Activated CD4-positive, alpha-beta T cell treated with anti-CD3 and anti-CD28 coated beads for 36 hours (primary cell): ENCODE measurements at regions of chr5 and their contacts with region 1.

Region 1: DNA sequence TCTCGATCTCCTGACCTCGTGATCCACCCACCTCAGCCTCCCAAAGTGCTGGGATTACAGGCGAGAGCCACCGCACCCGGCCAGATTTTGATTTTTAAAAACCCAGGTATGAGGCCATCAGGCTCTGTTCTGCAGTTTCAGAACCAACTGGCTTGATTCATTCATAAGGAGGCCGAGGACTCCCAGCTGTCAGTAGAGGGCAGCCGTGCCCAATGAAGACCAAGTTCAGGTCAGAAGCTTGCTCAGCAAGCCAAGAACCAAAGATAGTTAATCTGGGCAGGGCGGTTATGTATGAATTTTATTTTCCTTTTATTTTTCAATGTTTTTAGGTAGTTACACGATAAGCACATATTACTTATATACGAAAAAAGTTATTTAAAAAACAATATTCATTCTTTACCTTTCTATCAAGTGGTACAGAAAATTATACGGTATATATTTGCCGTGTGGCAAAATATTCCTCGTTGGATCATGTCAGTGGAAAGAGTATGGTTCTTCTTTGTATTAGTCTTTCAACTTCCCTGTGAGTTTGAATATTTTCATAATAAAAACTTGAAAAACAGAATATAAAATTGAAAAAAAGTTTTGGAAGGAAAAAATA is 18.0 kb downstream of the MGAT1 start:
- DNase-seq: peak; percentile 86
- ATAC-seq: peak; percentile 74
- H3K4me3 Mint-ChIP-seq: no peak overlapping the region
- H3K27ac Mint-ChIP-seq: no peak overlapping the region
- H3K4me1 Mint-ChIP-seq: peaks cover 22% of the 10 kb centered on the region
- H3K27me3 Mint-ChIP-seq: no peaks in the 10 kb centered on the region

Region 2: GRCh38 chr5:180441563-180441962 is 343.0 kb before region 1 on chr5:
- CTCF ChIA-PET with region 1: no interaction called
- POLR2A ChIA-PET with region 1: no interaction called
- intact Hi-C with region 1: no loop called
- DNase-seq: no peak
- ATAC-seq: no peak
- H3K4me3 Mint-ChIP-seq: no peak overlapping the region
- H3K27ac Mint-ChIP-seq: no peak overlapping the region
- H3K4me1 Mint-ChIP-seq: peaks cover 2% of the 10 kb centered on the region
- H3K27me3 Mint-ChIP-seq: peaks cover 14% of the 10 kb centered on the region

Region 3: DNA sequence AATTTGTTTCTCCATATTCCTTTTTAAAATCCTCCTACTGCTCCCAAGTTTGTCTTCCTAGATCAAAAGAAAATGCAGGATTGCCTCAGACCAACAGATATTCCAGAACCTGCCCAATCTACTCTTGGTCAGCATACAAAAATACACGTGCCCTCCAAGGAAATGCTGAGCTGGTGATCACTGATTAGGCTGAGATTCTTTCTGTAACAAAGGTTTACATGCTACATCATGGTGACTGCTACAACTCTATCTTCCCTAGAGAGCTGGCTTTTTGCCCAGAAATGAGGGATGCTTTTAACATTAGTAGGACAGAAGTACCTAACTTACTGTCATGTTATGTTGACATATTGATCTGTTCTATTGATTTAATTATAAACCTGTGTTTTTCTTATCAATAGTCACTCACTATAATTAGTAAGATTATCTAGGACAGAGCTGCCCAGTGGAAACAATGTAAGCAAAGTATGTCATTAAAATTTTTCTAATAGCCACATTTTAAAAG is 80.2 kb before region 1 on chr5:
- CTCF ChIA-PET with region 1: no interaction called
- POLR2A ChIA-PET with region 1: no interaction called
- intact Hi-C with region 1: no loop called
- DNase-seq: no peak
- ATAC-seq: no peak
- H3K4me3 Mint-ChIP-seq: no peak overlapping the region
- H3K27ac Mint-ChIP-seq: no peak overlapping the region
- H3K4me1 Mint-ChIP-seq: peaks cover 2% of the 10 kb centered on the region
- H3K27me3 Mint-ChIP-seq: peaks cover 2% of the 10 kb centered on the region

Region 4: DNA sequence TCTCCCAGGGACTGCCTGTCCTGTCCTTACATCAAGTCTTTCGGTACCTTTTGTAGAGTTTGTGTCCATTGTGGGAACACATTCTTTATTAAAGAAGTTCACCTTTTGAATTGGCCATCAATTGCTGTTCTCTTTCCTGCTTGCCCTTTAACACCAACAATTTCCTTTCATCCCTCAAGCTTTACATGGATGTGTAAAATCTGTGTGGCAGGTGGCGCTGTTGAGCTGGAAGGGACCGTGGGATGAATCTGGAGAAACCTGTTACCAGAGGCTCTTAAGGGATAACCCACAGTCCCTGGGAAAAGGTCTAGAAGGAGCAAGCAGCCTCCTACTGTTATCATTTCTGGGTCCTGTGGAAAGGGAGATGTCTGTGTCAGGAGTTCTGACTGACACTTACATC is 84.4 kb after region 1 on chr5:
- CTCF ChIA-PET with region 1: interaction called, 5 read pairs
- POLR2A ChIA-PET with region 1: no interaction called
- intact Hi-C with region 1: loop called in 1 of 2 experiments (anchors 2 kb)
- DNase-seq: peak; percentile 87
- ATAC-seq: peak; percentile 76
- H3K4me3 Mint-ChIP-seq: no peak overlapping the region
- H3K27ac Mint-ChIP-seq: no peak overlapping the region
- H3K4me1 Mint-ChIP-seq: peaks cover 5% of the 10 kb centered on the region
- H3K27me3 Mint-ChIP-seq: peaks cover 4% of the 10 kb centered on the region

Region 5: GRCh38 chr5:181052672-181053487 is 268.3 kb after region 1 on chr5:
- CTCF ChIA-PET with region 1: no interaction called
- POLR2A ChIA-PET with region 1: interaction called, 3 read pairs
- intact Hi-C with region 1: loop called (anchors 10 kb)
- DNase-seq: peak; percentile 45
- ATAC-seq: peak; percentile 36
- H3K4me3 Mint-ChIP-seq: peak overlapping the region; percentile 55
- H3K27ac Mint-ChIP-seq: no peak overlapping the region
- H3K4me1 Mint-ChIP-seq: peaks cover 11% of the 10 kb centered on the region
- H3K27me3 Mint-ChIP-seq: peaks cover 73% of the 10 kb centered on the region